ENCODE measurements at regions of chr12 and their contacts with region 1.

Region 1: DNA sequence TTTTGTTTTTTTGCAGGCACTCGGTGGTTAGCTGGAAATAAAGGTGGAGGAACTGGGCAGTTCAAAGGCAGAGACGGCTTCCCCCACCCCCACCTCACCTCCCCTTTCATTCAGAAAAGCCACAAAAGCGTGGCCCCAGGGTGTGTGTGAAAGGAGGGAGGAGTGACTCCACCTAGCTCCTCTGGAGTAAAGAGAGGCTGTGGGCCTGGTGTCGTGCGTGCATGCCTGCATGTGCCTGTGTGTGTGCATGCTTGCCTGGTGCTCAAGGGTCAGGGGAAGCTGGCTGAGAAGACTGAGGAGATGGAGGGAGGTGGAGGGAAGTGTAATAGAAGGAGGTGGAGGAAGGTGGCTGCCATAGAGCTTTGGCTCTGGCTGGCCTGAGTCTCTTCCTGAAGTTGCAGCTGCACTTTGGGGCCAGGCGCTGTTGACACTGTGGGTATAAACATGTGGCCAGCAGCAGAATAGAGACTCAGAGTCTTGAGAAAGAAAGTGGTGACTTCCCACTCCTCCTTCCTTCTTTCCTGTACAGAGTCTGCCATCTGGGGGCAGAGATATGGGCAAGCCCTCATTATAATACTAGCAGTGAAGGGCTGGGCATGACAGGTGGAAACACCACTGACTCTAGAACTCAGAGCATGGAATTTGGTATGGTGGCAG is 36.9 kb upstream of the SINHCAF start:
- DNase-seq: peak; percentile 75
- H3K4me3 Mint-ChIP-seq: peak overlapping the region; percentile 65
- H3K27ac Mint-ChIP-seq: peak overlapping the region; percentile 92
- H3K4me1 Mint-ChIP-seq: peaks cover 34% of the 10 kb centered on the region
- H3K27me3 Mint-ChIP-seq: peaks cover 10% of the 10 kb centered on the region

Region 2: DNA sequence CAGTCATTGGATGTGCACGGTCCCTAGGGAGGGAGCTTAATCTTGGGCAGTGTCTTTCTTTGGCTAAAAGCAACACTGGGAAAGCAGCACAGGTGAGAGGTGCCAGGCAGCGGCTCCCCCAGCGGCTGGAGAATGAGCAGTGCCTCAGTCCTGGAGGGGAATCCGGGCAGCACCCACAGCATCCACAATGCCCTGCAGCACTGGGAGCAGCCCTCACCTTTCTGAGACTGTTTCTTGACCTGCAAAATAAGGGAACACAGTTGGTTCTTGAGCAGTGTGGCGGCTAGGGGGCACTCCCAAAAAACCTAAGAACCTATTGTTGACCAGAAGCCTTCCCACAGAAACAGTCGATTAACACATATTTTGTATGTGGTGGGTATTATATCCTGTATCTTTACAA is 112.7 kb before region 1 on chr12:
- CTCF ChIA-PET with region 1: interaction called, 22 read pairs
- DNase-seq: no peak
- H3K4me3 Mint-ChIP-seq: no peak overlapping the region
- H3K27ac Mint-ChIP-seq: no peak overlapping the region
- H3K4me1 Mint-ChIP-seq: no peaks in the 10 kb centered on the region
- H3K27me3 Mint-ChIP-seq: peaks cover 9% of the 10 kb centered on the region

Region 3: GRCh38 chr12:31339831-31340622 is 22.9 kb before region 1 on chr12:
- CTCF ChIA-PET with region 1: no interaction called
- DNase-seq: no peak
- H3K4me3 Mint-ChIP-seq: no peak overlapping the region
- H3K27ac Mint-ChIP-seq: no peak overlapping the region
- H3K4me1 Mint-ChIP-seq: no peaks in the 10 kb centered on the region
- H3K27me3 Mint-ChIP-seq: peaks cover 3% of the 10 kb centered on the region

Region 4: DNA sequence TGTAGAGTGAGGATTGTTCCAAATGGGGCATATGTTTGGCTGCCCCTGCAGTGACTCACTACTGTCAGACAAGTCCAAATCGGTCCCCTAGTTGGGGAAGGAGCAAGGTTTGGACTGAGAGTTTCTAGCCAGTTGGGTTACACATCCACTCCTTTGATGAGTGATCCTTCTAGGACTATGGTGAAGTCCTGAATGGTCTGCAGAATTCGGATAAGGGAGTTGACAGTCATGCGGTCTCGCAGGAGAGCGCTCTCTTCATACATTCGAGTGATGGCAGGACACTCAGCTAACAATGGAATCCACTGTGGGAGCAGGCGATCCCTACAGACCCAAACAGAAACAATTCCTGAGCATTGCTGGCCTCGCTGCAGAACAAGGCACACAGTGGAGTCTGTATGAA is 24.6 kb after region 1 on chr12:
- CTCF ChIA-PET with region 1: no interaction called
- DNase-seq: no peak
- H3K4me3 Mint-ChIP-seq: no peak overlapping the region
- H3K27ac Mint-ChIP-seq: no peak overlapping the region
- H3K4me1 Mint-ChIP-seq: no peaks in the 10 kb centered on the region
- H3K27me3 Mint-ChIP-seq: peaks cover 13% of the 10 kb centered on the region

Region 5: GRCh38 chr12:31506515-31507306 is 143.8 kb after region 1 on chr12:
- CTCF ChIA-PET with region 1: no interaction called
- DNase-seq: no peak
- H3K4me3 Mint-ChIP-seq: no peak overlapping the region
- H3K27ac Mint-ChIP-seq: no peak overlapping the region
- H3K4me1 Mint-ChIP-seq: no peaks in the 10 kb centered on the region
- H3K27me3 Mint-ChIP-seq: no peaks in the 10 kb centered on the region